BJ (cell line): ENCODE measurements at regions of chr12 and their contacts with region 1.

Region 1: GRCh38 chr12:52023182-52023975 is 16.6 kb downstream of the TAMALIN start:
- DNase-seq: no peak
- H3K4me3 ChIP-seq: peak overlapping the region; percentile 61
- H3K27me3 ChIP-seq: no peaks in the 10 kb centered on the region; the same call in 1 of the 2 replicates
- CTCF ChIP-seq: peak; percentile 91

Region 2: GRCh38 chr12:51898937-51899336 is 124.4 kb before region 1 on chr12:
- CTCF ChIA-PET with region 1: interaction called, 16 read pairs
- POLR2A ChIA-PET with region 1: no interaction called
- DNase-seq: no peak
- H3K4me3 ChIP-seq: no peak overlapping the region
- H3K27me3 ChIP-seq: no peaks in the 10 kb centered on the region
- CTCF ChIP-seq: no peak

Region 3: GRCh38 chr12:51994959-51995358 is 28.4 kb before region 1 on chr12:
- CTCF ChIA-PET with region 1: interaction called, 317 read pairs
- POLR2A ChIA-PET with region 1: interaction called, 3 read pairs
- DNase-seq: no peak
- H3K4me3 ChIP-seq: no peak overlapping the region
- H3K27me3 ChIP-seq: no peaks in the 10 kb centered on the region
- CTCF ChIP-seq: no peak

Region 4: DNA sequence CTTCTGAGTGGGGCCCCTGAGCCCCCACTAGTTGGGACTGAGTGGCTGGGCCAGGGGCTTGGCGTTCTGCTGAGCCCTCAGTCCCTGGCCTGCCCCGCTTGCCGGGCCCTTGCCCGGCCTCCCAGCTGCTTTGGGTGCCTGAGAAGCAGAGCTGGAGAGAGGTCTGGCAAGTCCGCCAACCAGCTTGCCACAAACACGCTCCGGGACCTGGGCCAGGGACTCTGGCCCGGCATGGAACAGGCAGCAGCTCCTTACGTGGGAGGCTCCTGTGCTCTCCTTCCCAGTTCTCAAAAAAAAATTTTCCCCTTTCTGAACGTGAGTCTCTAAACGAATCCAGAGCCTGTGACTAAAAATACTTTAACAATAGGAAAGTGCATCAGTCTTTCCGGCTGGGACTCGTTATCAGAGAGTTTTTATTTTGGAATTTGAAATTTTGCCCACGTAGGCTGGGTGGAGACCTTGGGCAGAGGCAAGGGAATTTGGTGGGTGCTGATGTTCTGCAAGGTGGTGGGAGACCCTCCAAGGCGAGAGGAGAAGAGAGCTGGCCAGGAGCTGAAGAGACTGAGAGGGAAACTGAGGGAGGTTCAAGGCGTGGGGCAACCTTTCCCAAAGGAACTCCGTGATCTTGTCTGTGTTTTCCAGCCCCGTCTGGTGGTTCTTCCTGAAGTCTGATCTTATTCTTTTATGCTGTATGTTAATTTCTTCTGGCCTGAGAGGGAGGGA is 21.0 kb after region 1 on chr12:
- CTCF ChIA-PET with region 1: interaction called, 114 read pairs
- POLR2A ChIA-PET with region 1: no interaction called
- DNase-seq: peak; percentile 89
- H3K4me3 ChIP-seq: no peak overlapping the region
- H3K27me3 ChIP-seq: no peaks in the 10 kb centered on the region
- CTCF ChIP-seq: no peak

Region 5: DNA sequence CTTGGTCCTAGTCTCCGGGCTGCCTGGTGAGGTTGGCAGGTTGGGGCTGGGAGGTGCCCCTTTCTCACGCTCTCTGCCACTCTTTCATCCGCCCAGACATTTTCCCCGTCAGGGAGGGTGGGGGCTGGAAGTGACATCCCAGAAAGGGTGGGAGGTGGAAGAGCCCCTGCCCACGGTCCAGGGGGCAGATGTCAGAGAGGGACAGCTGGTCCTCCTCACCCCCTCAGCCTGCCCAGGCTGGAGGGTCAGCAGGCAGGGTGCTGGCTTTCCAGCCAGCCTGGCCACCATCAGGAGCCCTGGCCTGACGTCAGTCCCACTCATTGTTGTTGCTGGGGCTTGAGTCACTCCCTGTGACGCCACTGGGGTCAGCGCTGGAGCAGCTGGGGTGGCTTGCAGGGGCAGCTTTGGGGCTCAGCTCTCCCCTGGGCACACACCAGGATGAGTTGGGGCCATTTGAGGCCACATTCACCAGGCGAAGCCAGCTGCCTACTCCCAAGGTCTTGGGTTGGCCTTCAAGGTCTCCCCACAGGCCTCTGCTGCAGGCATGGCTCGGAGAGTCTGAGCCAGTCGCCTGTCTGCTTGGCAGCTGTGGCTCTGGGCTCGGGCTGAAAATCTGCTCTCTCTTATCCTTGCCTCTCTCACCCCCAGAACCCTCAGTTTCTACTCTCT is 40.7 kb after region 1 on chr12:
- CTCF ChIA-PET with region 1: interaction called, 59 read pairs
- POLR2A ChIA-PET with region 1: no interaction called
- DNase-seq: no peak
- H3K4me3 ChIP-seq: no peak overlapping the region
- H3K27me3 ChIP-seq: no peaks in the 10 kb centered on the region
- CTCF ChIP-seq: no peak

Region 6: GRCh38 chr12:52147367-52147972 is 124.1 kb after region 1 on chr12:
- CTCF ChIA-PET with region 1: interaction called, 11 read pairs
- POLR2A ChIA-PET with region 1: no interaction called
- DNase-seq: peak; percentile 97
- H3K4me3 ChIP-seq: no peak overlapping the region
- H3K27me3 ChIP-seq: no peaks in the 10 kb centered on the region
- CTCF ChIP-seq: no peak

Region 7: GRCh38 chr12:52243856-52244614 is 220.7 kb after region 1 on chr12:
- CTCF ChIA-PET with region 1: no interaction called
- POLR2A ChIA-PET with region 1: no interaction called
- DNase-seq: peak; percentile 90
- H3K4me3 ChIP-seq: no peak overlapping the region
- H3K27me3 ChIP-seq: no peaks in the 10 kb centered on the region
- CTCF ChIP-seq: no peak